Activated CD4-positive, alpha-beta T cell treated with anti-CD3 and anti-CD28 coated beads for 36 hours (primary cell): ENCODE measurements at regions of chrX and their contacts with region 1.

Region 1: GRCh38 chrX:12352922-12353321 is 214.6 kb downstream of the FRMPD4 start:
- DNase-seq: no peak
- ATAC-seq: no peak
- H3K4me3 Mint-ChIP-seq: no peak overlapping the region
- H3K27ac Mint-ChIP-seq: no peak overlapping the region
- H3K4me1 Mint-ChIP-seq: no peaks in the 10 kb centered on the region
- H3K27me3 Mint-ChIP-seq: no peaks in the 10 kb centered on the region

Region 2: GRCh38 chrX:12329476-12329875 is 23.4 kb before region 1 on chrX:
- CTCF ChIA-PET with region 1: no interaction called
- POLR2A ChIA-PET with region 1: no interaction called
- intact Hi-C with region 1: loop called in 1 of 2 experiments (anchors 1 kb)
- DNase-seq: no peak
- ATAC-seq: no peak
- H3K4me3 Mint-ChIP-seq: no peak overlapping the region
- H3K27ac Mint-ChIP-seq: no peak overlapping the region
- H3K4me1 Mint-ChIP-seq: no peaks in the 10 kb centered on the region
- H3K27me3 Mint-ChIP-seq: no peaks in the 10 kb centered on the region

Region 3: DNA sequence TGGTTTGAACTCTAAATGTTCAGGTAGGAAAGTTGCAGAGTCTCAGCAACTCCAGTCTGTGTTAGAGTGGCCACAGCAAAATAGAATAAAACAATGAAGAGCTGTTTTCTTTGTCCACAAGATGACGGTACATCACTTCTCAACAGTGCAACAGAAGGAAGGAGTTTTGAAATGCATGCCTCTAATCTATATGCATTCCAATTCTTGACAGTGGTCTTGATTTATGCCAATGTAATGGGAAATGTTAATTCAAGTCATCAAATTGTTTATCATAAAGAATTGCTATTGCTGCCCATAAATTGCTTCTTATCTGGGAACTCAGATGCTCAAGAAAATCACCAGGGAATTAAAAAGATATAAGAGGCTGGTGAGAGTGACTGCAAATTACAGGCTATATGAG is 242.8 kb after region 1 on chrX:
- CTCF ChIA-PET with region 1: no interaction called
- POLR2A ChIA-PET with region 1: no interaction called
- intact Hi-C with region 1: no loop called
- DNase-seq: no peak
- ATAC-seq: no peak
- H3K4me3 Mint-ChIP-seq: no peak overlapping the region
- H3K27ac Mint-ChIP-seq: no peak overlapping the region
- H3K4me1 Mint-ChIP-seq: no peaks in the 10 kb centered on the region
- H3K27me3 Mint-ChIP-seq: peaks cover 2% of the 10 kb centered on the region